Caco-2 (cell line): ENCODE measurements at regions of chr13 and their contacts with region 1.

Region 1: GRCh38 chr13:75566658-75567057 is 17.1 kb downstream of the UCHL3 start:
- DNase-seq: no peak
- H3K4me3 ChIP-seq: no peak overlapping the region
- H3K4me3 Mint-ChIP-seq: no peak overlapping the region
- H3K27ac Mint-ChIP-seq: no peak overlapping the region
- H3K4me1 ChIP-seq: no peaks in the 10 kb centered on the region
- H3K4me1 Mint-ChIP-seq: no peaks in the 10 kb centered on the region
- H3K27me3 ChIP-seq: no peaks in the 10 kb centered on the region
- H3K27me3 Mint-ChIP-seq: no peaks in the 10 kb centered on the region
- CTCF ChIP-seq: peak; percentile 24 to 30

Region 2: GRCh38 chr13:74533226-74533625 is 1033.4 kb before region 1 on chr13:
- CTCF ChIA-PET with region 1: no interaction called
- POLR2A ChIA-PET with region 1: no interaction called
- intact Hi-C with region 1: no loop called
- DNase-seq: no peak
- H3K4me3 ChIP-seq: no peak overlapping the region
- H3K4me3 Mint-ChIP-seq: no peak overlapping the region
- H3K27ac Mint-ChIP-seq: no peak overlapping the region
- H3K4me1 ChIP-seq: no peaks in the 10 kb centered on the region
- H3K4me1 Mint-ChIP-seq: no peaks in the 10 kb centered on the region
- H3K27me3 ChIP-seq: no peaks in the 10 kb centered on the region
- H3K27me3 Mint-ChIP-seq: peaks cover 4% of the 10 kb centered on the region
- CTCF ChIP-seq: no peak

Region 3: GRCh38 chr13:75384879-75385707 is 181.6 kb before region 1 on chr13:
- CTCF ChIA-PET with region 1: no interaction called
- POLR2A ChIA-PET with region 1: no interaction called
- intact Hi-C with region 1: no loop called
- DNase-seq: peak; percentile 70 to 77
- H3K4me3 ChIP-seq: peak overlapping the region; percentile 6
- H3K4me3 Mint-ChIP-seq: peak overlapping the region; percentile 67
- H3K27ac Mint-ChIP-seq: peak overlapping the region; percentile 93
- H3K4me1 ChIP-seq: peaks cover 76% of the 10 kb centered on the region
- H3K4me1 Mint-ChIP-seq: peaks cover 44% of the 10 kb centered on the region
- H3K27me3 ChIP-seq: no peaks in the 10 kb centered on the region
- H3K27me3 Mint-ChIP-seq: no peaks in the 10 kb centered on the region
- CTCF ChIP-seq: no peak

Region 4: GRCh38 chr13:75635828-75636435 is 69.3 kb after region 1 on chr13 and contains the start of gene LMO7:
- CTCF ChIA-PET with region 1: no interaction called
- POLR2A ChIA-PET with region 1: no interaction called
- intact Hi-C with region 1: loop called (anchors 2 kb)
- DNase-seq: peak; percentile 84 to 88
- H3K4me3 ChIP-seq: peak within 1 kb of the TSS; percentile 57
- H3K4me3 Mint-ChIP-seq: peak within 1 kb of the TSS; percentile 78
- H3K27ac Mint-ChIP-seq: peak within 1 kb of the TSS; percentile 42
- H3K4me1 ChIP-seq: peaks cover 8% of the 10 kb centered on the region; the same call in 1 of the 2 replicates
- H3K4me1 Mint-ChIP-seq: peaks cover 16% of the 10 kb centered on the region
- H3K27me3 ChIP-seq: no peaks in the 10 kb centered on the region
- H3K27me3 Mint-ChIP-seq: no peaks in the 10 kb centered on the region
- CTCF ChIP-seq: no peak
- total RNA-seq, gene LMO7: 209 and 230 TPM in 2 replicates

Region 5: DNA sequence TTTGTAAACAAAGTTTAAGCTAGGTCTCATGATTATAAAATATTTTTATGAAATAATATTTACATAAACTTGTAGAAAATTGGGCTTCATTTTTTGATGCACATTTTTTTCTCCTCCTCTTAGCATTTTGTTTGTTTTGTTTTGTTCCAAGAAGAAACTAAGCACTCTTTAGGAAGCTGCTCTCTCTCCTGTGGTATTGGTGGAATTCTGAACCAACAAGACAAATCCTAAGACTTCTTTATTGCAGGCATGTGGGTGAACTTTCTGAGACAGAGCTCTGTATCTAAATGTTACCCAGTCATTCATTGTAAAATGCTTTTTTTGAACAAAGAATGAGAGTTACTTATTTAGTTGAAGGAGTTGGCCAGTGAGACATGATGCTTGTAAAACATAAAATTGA is 108.8 kb after region 1 on chr13:
- CTCF ChIA-PET with region 1: no interaction called
- POLR2A ChIA-PET with region 1: no interaction called
- intact Hi-C with region 1: loop called (anchors 5 kb)
- DNase-seq: no peak
- H3K4me3 ChIP-seq: no peak overlapping the region
- H3K4me3 Mint-ChIP-seq: no peak overlapping the region
- H3K27ac Mint-ChIP-seq: no peak overlapping the region
- H3K4me1 ChIP-seq: no peaks in the 10 kb centered on the region
- H3K4me1 Mint-ChIP-seq: no peaks in the 10 kb centered on the region
- H3K27me3 ChIP-seq: no peaks in the 10 kb centered on the region
- H3K27me3 Mint-ChIP-seq: no peaks in the 10 kb centered on the region
- CTCF ChIP-seq: no peak

Region 6: GRCh38 chr13:75830842-75831241 is 264.2 kb after region 1 on chr13:
- CTCF ChIA-PET with region 1: no interaction called
- POLR2A ChIA-PET with region 1: no interaction called
- intact Hi-C with region 1: loop called (anchors 10 kb)
- DNase-seq: no peak
- H3K4me3 ChIP-seq: no peak overlapping the region
- H3K4me3 Mint-ChIP-seq: no peak overlapping the region
- H3K27ac Mint-ChIP-seq: no peak overlapping the region
- H3K4me1 ChIP-seq: peaks cover 8% of the 10 kb centered on the region
- H3K4me1 Mint-ChIP-seq: peaks cover 10% of the 10 kb centered on the region
- H3K27me3 ChIP-seq: no peaks in the 10 kb centered on the region
- H3K27me3 Mint-ChIP-seq: no peaks in the 10 kb centered on the region
- CTCF ChIP-seq: no peak